Naive thymus-derived CD4-positive, alpha-beta T cell (primary cell): ENCODE measurements at regions of chr3 and their contacts with region 1.

Region 1: DNA sequence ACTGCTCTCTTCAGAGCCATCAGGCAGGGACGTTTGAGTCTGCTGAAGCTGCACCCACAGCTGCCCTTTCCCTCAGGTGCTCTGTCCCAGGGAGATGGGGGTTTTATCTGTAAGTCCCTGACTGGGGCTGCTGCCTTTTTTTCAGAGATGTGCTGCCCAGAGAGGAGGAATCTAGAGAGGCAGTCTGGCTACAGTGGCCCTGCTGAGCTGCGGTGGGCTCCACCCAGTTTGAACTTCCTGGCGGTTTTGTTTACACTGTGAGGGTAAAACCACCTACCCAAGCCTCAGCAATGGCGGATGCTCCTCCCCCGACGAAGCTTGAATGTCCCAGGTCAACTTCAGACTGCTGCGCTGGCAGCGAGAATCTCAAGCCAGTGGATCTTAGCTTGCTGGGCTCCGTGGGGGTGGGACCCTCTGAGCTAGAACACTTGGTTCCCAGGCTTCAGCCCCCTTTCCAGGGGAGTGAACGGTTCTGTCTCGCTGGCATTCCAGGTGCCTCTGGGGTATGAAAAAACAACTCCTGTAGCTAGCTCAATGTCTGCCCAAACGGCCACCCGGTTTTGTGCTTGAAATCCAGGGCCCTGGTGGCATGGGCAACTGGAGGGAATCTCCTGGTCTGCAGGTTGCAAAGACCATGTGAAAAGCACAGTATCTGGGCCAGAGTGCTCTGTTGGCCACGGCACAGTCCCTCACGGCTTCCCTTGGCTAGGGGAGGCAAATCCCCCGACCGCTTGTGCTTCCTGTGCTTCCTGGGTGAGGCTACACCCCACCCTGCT is 21.1 kb upstream of the ST6GAL1 start:
- DNase-seq: peak; percentile 40 to 86 (median 78)
- ATAC-seq: peak; percentile 86
- H3K4me3 ChIP-seq: peak overlapping the region; percentile 48
- H3K4me3 Mint-ChIP-seq: peak overlapping the region; percentile 61 to 78 (median 72)
- H3K27ac ChIP-seq: peak overlapping the region; percentile 66
- H3K27ac Mint-ChIP-seq: peak overlapping the region; percentile 88 to 94 (median 91)
- H3K4me1 ChIP-seq: peaks cover 17 to 18% of the 10 kb centered on the region in 2 donors
- H3K4me1 Mint-ChIP-seq: peaks cover 17 to 48% (median 37%) of the 10 kb centered on the region in 7 donors
- H3K27me3 ChIP-seq: no peaks in the 10 kb centered on the region
- H3K27me3 Mint-ChIP-seq: no peaks in the 10 kb centered on the region

Region 2: GRCh38 chr3:186425788-186426730 is 483.2 kb before region 1 on chr3:
- CTCF ChIA-PET with region 1: no interaction called
- POLR2A ChIA-PET with region 1: no interaction called
- intact Hi-C with region 1: no loop called
- DNase-seq: no peak
- ATAC-seq: peak; percentile 38
- H3K4me3 ChIP-seq: no peak overlapping the region
- H3K4me3 Mint-ChIP-seq: no peak overlapping the region
- H3K27ac ChIP-seq: no peak overlapping the region
- H3K27ac Mint-ChIP-seq: no peak overlapping the region
- H3K4me1 ChIP-seq: no peaks in the 10 kb centered on the region
- H3K4me1 Mint-ChIP-seq: peaks cover 0 to 2% (median 0%) of the 10 kb centered on the region in 7 donors
- H3K27me3 ChIP-seq: no peaks in the 10 kb centered on the region
- H3K27me3 Mint-ChIP-seq: peaks cover 0 to 8% (median 0%) of the 10 kb centered on the region in 5 donors

Region 3: DNA sequence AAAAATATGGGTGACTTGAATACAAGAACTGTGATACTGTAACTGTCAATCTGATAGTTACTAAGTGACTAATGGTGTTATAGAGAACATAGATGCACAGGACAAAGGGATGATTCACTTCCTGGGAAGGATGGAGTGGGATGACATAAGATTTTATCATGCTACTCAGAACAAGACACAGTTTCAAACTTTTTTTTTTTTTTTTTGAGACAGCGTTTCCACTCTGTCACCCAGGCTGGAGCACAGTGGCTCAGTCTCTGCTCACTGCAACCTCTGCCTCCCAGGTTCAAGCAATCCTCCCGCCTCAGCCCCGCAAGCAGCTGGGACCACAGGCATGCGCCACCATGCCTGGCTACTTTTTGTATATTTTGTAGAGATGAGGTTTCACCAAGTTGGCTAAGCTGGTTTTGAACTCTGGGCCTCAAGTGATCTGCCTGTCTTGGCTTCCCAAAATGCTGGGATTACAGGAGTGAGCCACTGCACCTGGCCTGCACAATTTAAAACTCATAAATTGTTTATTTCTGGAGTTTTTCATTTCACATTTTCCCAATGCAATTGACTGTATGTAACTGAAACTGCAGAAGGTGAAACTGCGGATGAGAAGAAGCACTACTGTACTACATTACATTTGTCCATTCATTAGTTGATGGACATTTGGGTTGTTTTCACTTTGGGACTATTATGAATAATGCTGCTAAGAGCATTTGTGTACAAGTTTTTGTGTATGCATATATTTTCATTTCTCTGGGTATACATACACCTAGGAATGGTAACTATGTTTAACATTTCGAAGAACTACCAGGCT is 26.2 kb before region 1 on chr3:
- CTCF ChIA-PET with region 1: interaction called, 4 read pairs
- POLR2A ChIA-PET with region 1: interaction called, 6 read pairs
- intact Hi-C with region 1: loop called in 1 of 2 experiments (anchors 2 kb)
- DNase-seq: peak in 1 of 9 donors; percentile 64
- ATAC-seq: peak; percentile 45
- H3K4me3 ChIP-seq: no peak overlapping the region
- H3K4me3 Mint-ChIP-seq: peak overlapping the region in 2 of 10 donors; percentile 37 to 49
- H3K27ac ChIP-seq: no peak overlapping the region
- H3K27ac Mint-ChIP-seq: peak overlapping the region in 3 of 9 donors; percentile 47 to 64 (median 54)
- H3K4me1 ChIP-seq: peaks cover 13 to 25% of the 10 kb centered on the region in 2 donors
- H3K4me1 Mint-ChIP-seq: peaks cover 15 to 50% (median 41%) of the 10 kb centered on the region in 7 donors
- H3K27me3 ChIP-seq: no peaks in the 10 kb centered on the region
- H3K27me3 Mint-ChIP-seq: peaks cover 0 to 2% (median 0%) of the 10 kb centered on the region in 5 donors

Region 4: GRCh38 chr3:186895331-186895791 is 13.9 kb before region 1 on chr3:
- CTCF ChIA-PET with region 1: no interaction called
- POLR2A ChIA-PET with region 1: interaction called, 7 read pairs
- intact Hi-C with region 1: loop called in 1 of 2 experiments (anchors 2 kb)
- DNase-seq: no peak
- ATAC-seq: no peak
- H3K4me3 ChIP-seq: no peak overlapping the region
- H3K4me3 Mint-ChIP-seq: no peak overlapping the region
- H3K27ac ChIP-seq: no peak overlapping the region
- H3K27ac Mint-ChIP-seq: peak overlapping the region in 1 of 9 donors; percentile 25
- H3K4me1 ChIP-seq: no peaks in the 10 kb centered on the region
- H3K4me1 Mint-ChIP-seq: peaks cover 1 to 20% (median 9%) of the 10 kb centered on the region in 7 donors
- H3K27me3 ChIP-seq: no peaks in the 10 kb centered on the region
- H3K27me3 Mint-ChIP-seq: no peaks in the 10 kb centered on the region

Region 5: GRCh38 chr3:186921578-186921977 is 12.3 kb after region 1 on chr3:
- CTCF ChIA-PET with region 1: interaction called, 3 read pairs
- POLR2A ChIA-PET with region 1: interaction called, 11 read pairs
- intact Hi-C with region 1: no loop called
- DNase-seq: no peak
- ATAC-seq: no peak
- H3K4me3 ChIP-seq: no peak overlapping the region
- H3K4me3 Mint-ChIP-seq: no peak overlapping the region
- H3K27ac ChIP-seq: no peak overlapping the region
- H3K27ac Mint-ChIP-seq: no peak overlapping the region
- H3K4me1 ChIP-seq: peaks cover under 1 to 16% of the 10 kb centered on the region in 2 donors
- H3K4me1 Mint-ChIP-seq: peaks cover 7 to 37% (median 23%) of the 10 kb centered on the region in 7 donors
- H3K27me3 ChIP-seq: no peaks in the 10 kb centered on the region
- H3K27me3 Mint-ChIP-seq: peaks cover 0 to 3% (median 0%) of the 10 kb centered on the region in 5 donors